Activated T-helper 1 cell treated with anti-CD3 and anti-CD28 coated beads, Interleukin-12 subunit alpha, Interleukin-12 subunit beta, Interleukin-2, Interleukin-4 antibody, amounts not matched to agents 30 ng/mL and 10 ng/mL and 1 ng/mL, durations not matched to agents 14 hours and 24 hours and 36 hours (primary cell): ENCODE measurements at regions of chr9 and their contacts with region 1.

Region 1: DNA sequence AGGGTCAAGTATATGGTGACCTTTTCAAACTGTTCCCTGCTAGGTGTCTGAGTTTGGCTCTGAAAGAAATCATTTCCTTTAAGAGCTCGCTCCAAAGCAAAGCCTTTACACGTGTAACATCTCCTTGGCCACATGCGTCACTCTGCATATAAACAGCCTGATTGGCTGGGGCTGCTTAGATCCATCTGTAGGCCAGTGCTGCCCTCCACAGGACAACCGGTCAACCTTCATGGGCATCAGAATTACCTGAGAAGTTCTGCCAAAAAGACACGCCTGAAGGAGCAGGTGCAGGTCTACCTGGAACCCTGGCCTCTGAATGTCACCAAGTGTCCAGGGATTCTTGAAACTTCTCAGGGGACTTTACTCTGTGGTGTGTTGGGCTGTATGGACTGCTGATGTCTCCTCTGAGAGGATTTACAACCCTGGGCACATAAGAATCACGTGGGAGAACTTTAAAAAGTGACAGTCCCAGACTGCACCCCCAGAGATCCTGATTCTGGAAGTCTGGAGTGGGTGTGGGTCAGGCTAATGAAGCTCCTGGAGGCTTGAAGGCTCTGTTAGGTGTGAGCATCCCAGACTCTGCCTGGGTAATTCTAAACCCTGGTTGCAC is 497.6 kb downstream of the GADD45G start:
- DNase-seq: peak; percentile 75
- H3K4me3 Mint-ChIP-seq: no peak overlapping the region
- H3K27ac Mint-ChIP-seq: peak overlapping the region; percentile 31
- H3K4me1 Mint-ChIP-seq: peaks cover 18% of the 10 kb centered on the region
- H3K27me3 Mint-ChIP-seq: peaks cover 7% of the 10 kb centered on the region

Region 2: GRCh38 chr9:89597711-89598625 is 504.4 kb before region 1 on chr9:
- intact Hi-C with region 1: loop called (anchors 1 kb)
- DNase-seq: peak; percentile 48
- H3K4me3 Mint-ChIP-seq: no peak overlapping the region
- H3K27ac Mint-ChIP-seq: no peak overlapping the region
- H3K4me1 Mint-ChIP-seq: peaks cover 2% of the 10 kb centered on the region
- H3K27me3 Mint-ChIP-seq: peaks cover 16% of the 10 kb centered on the region

Region 3: DNA sequence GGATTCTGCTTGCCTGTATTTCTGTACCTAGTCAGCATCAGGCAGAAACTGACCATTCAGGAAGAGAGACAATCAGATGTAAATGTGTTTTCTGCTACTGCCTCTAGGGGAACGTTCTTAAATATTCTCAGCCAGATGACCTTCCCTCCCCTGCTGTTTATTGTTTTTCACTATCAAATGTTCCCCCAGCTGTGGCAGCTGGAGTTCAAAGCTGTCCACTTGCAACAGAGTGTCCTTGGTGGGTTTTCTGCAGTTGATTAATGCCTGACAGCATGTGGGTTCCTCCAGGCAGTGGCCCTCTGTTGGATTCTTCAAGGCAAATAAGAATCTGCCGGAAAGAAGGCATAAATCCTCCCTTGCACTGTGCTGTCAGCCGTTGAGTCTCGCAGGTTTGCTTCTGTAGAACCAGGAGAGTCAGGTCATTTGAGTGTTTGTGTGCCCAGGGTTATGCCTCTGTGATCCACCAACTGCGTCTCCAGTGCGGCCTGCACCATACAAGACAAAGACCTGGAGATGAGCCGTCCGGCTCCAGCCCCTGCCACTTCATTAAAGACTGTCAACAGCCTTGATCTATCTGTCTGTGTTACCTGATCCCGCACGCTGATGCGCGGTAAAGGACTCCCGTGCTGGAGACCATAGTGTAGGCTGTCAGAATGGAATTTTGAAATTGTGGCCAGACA is 294.2 kb before region 1 on chr9:
- intact Hi-C with region 1: loop called (anchors 5 kb)
- DNase-seq: no peak
- H3K4me3 Mint-ChIP-seq: no peak overlapping the region
- H3K27ac Mint-ChIP-seq: no peak overlapping the region
- H3K4me1 Mint-ChIP-seq: peaks cover 48% of the 10 kb centered on the region
- H3K27me3 Mint-ChIP-seq: peaks cover 10% of the 10 kb centered on the region

Region 4: DNA sequence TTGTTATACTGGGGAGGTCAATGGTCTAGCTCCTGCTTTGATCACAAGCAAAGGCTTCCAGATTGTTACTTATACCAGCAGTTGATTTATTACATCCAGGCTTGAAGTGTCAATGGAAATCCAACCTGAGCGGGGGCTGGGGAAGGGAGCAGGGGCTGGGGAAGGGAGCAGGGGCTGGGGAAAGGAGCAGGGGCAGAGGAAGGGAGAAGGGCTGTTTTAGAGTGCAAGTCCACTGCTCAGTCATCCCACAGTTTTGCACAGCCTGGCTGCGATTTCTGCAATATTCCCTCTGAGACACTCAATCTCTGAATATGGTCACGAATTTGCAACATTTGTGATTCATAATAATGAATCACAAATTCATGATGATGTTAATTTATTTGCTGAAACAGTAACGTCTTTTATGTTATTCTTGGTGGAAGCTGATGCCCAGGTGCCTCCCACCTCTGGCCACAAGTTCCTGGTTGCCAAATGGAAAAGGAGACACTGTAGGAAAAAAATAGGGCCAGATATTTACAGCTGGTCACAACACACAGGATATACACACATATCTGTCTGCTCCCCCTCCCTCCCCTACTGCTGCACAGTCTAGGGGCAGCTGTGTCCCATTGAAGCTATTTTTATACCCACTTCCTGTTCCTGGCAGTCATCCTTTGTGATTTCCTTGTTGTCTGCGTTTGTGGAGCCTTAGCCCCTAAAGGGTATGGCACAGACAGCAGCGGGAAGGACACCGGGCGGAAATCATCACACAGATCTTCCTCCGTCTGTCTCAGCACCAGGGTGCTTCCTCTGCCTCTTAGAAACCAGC is 172.5 kb before region 1 on chr9:
- intact Hi-C with region 1: no loop called
- DNase-seq: no peak
- H3K4me3 Mint-ChIP-seq: no peak overlapping the region
- H3K27ac Mint-ChIP-seq: no peak overlapping the region
- H3K4me1 Mint-ChIP-seq: peaks cover 23% of the 10 kb centered on the region
- H3K27me3 Mint-ChIP-seq: peaks cover 11% of the 10 kb centered on the region

Region 5: DNA sequence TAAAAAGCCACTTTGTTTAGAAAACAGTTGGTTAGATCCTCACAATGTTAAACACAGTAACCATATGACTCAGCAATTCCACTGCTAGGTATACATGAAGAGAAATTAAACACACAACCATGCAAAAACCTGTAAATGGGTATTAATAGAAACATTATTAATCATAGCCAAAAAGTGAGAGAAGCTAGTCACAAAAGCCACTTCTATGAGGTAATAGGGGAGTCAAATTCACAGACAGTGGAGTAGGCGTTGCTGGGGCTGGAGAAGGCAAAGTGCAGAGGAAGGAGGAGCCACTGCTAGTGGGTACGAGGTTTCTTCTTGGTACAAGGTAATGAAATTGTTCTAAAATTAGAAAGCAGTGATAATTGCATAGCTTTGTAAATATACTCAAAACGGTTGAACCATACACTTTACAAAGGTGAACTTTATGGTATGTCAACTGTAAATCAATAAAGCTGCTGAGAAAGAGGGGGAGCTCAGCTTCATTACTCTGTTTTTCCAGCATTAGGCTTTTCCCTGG is 133.2 kb before region 1 on chr9:
- intact Hi-C with region 1: loop called (anchors 5 kb)
- DNase-seq: no peak
- H3K4me3 Mint-ChIP-seq: peak overlapping the region; percentile 15
- H3K27ac Mint-ChIP-seq: peak overlapping the region; percentile 55
- H3K4me1 Mint-ChIP-seq: peaks cover 59% of the 10 kb centered on the region
- H3K27me3 Mint-ChIP-seq: no peaks in the 10 kb centered on the region

Region 6: DNA sequence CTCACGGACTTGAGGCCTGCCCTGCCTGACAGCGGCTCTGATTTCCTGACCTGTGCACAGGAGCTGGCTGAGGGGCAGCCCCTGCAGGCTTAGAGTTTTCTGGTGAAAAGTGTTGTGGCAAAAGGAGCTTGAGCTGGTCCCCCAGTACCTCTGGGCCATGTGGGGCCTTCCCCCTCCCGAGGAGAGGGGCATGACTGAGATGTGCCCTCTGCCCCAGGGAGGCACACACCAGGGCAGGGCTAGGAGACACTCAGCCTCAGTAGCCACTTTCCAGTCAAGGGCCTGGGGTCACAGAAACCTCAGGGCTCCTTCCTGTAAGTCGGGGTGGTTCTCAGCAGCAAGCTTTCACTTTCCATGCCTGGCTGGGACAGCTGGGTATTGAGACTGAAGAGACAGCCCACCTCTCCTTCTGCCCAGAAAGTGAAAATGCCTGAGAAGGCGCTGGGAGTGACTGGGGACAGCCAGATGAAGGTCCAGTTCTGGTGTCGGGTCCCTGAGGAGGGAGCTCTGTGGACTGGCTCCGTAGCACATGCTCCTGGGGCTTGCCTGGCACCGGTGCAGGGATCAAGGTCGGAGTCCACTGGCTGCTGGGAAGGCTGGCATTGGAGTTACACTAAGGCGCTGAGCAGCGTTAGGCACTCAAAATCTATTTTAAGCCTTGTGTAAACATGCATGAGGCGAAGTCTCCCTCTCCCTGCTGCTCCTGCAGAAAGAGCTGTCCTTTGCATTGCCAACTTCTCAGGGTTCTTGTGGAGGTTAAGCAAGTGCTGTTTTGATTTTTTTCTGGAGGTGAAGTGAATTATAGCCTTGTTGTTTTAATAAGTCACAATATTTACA is 102.6 kb before region 1 on chr9:
- intact Hi-C with region 1: loop called (anchors 1 kb)
- DNase-seq: peak; percentile 68
- H3K4me3 Mint-ChIP-seq: peak overlapping the region; percentile 69
- H3K27ac Mint-ChIP-seq: peak overlapping the region; percentile 75
- H3K4me1 Mint-ChIP-seq: peaks cover 35% of the 10 kb centered on the region
- H3K27me3 Mint-ChIP-seq: no peaks in the 10 kb centered on the region

Region 7: DNA sequence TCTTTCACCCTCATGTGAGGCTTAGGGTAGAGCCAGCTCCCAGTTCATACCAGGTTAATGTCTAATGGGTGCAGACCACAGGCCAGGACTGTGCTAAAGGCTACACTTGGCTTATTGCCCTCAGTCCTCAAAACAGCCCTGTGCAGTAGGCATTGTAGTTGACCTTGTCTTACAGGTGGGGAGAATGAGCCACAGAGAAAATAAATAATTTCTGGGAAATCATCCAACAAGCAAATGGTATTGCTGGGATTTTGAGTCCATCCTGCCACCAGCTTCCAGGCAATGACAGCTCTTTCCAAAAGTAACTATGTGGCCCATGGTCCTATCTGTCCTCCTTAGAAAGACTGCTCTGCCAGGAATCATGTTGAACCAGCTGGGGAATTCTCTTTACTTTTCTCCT is 47.6 kb before region 1 on chr9:
- intact Hi-C with region 1: no loop called
- DNase-seq: no peak
- H3K4me3 Mint-ChIP-seq: no peak overlapping the region
- H3K27ac Mint-ChIP-seq: no peak overlapping the region
- H3K4me1 Mint-ChIP-seq: no peaks in the 10 kb centered on the region
- H3K27me3 Mint-ChIP-seq: peaks cover 15% of the 10 kb centered on the region

Region 8: DNA sequence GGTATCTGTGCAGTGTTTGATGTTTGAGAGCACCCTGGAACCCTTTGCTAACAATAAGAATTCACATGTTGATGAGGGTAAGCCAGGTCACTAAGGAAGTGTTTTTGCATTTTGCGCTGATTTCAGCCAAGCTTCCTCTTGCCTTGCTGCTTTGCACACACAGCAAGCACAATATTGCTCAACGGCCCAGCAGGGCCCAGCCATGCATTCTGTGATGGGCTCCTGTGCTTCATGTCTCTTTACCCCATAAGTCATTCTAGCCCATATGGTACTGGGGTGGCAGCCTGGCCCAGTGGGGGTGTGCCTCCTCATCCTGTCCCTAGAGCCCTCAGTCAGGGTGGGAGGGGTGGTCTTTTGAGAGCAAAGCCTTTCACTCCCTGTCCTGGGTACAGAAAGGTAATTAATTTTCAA is 16.3 kb before region 1 on chr9:
- intact Hi-C with region 1: no loop called
- DNase-seq: no peak
- H3K4me3 Mint-ChIP-seq: no peak overlapping the region
- H3K27ac Mint-ChIP-seq: no peak overlapping the region
- H3K4me1 Mint-ChIP-seq: no peaks in the 10 kb centered on the region
- H3K27me3 Mint-ChIP-seq: peaks cover 27% of the 10 kb centered on the region